ENCODE measurements at regions of chr17 and their contacts with region 1.

Region 1: GRCh38 chr17:67602956-67603355 is 114.8 kb upstream of the NOL11 start:
- DNase-seq: peak; percentile 43
- H3K4me3 ChIP-seq: no peak overlapping the region
- H3K27ac ChIP-seq: no peak overlapping the region
- H3K27me3 ChIP-seq: no peaks in the 10 kb centered on the region
- CTCF ChIP-seq: peak; percentile 75

Region 2: GRCh38 chr17:67475236-67475937 is 127.6 kb before region 1 on chr17:
- in situ Hi-C with region 1: loop called (anchors 25 kb)
- DNase-seq: peak; percentile 66
- H3K4me3 ChIP-seq: peak overlapping the region; percentile 1
- H3K27ac ChIP-seq: no peak overlapping the region
- H3K27me3 ChIP-seq: no peaks in the 10 kb centered on the region
- CTCF ChIP-seq: peak; percentile 99

Region 3: DNA sequence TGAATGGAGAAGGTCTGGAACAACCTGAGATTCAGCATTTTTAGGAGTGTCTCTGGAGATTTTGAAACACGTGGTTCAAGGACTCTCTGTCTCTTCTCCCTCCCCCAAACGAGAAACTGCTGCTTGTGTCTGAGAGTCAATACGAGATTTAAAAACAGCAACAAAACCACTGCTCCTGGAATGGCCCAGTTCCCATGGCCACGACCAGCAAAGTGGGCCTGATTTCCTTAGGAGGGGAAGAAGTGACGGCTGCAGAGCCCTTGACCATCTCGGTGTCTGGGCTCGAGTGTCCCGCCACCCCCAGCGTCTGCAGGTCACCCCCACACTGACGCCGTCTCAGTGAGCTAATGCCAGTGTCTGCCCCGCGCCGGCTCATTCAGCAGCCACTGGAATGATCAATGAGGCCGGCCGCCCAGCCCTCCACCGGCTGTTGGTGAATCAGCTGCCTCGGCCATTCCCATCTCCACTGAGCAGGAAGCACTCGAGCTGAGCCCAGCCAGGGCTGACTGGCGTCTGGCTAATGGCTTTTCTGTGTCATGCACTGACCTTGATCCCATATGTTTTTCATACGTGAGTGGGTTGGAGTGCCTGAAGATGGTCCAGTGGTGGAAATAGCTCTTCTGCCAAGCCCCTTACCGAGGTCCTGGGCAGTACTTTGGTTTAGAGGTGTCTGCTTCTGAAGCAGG is 74.1 kb before region 1 on chr17:
- in situ Hi-C with region 1: no loop called
- DNase-seq: peak; percentile 94
- H3K4me3 ChIP-seq: peak overlapping the region; percentile 47
- H3K27ac ChIP-seq: peak overlapping the region; percentile 86
- H3K27me3 ChIP-seq: no peaks in the 10 kb centered on the region
- CTCF ChIP-seq: no peak